Right cardiac atrium (tissue), 5 donors: ENCODE measurements at regions of chr18 and their contacts with region 1.

Region 1: DNA sequence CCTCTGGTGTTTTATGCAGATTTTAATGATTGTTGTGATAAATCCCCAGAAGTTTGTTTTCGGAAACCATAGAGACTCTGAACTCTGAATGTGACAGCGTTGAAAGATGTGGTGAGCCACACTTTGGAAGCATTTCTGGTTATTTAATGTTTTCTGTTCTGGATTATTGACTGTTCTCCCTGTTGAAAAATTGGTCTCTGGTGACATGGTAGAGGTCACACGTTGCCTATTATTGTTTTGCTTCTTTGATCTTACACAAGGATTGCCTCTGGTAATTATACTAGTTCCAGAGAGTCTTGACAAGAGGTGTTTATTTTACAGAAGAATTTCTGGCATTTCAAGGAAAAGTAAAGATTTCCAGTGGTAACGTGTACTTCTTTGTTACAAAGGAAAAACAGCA is 127.1 kb downstream of the GREB1L start:
- DNase-seq: no peak
- ATAC-seq: no peak
- H3K4me3 ChIP-seq: no peak overlapping the region
- H3K27ac ChIP-seq: no peak overlapping the region
- H3K4me1 ChIP-seq: no peaks in the 10 kb centered on the region
- H3K27me3 ChIP-seq: no peaks in the 10 kb centered on the region

Region 2: GRCh38 chr18:21327101-21327500 is 42.0 kb before region 1 on chr18:
- intact Hi-C with region 1: loop called in 1 of 4 experiments (anchors 10 kb)
- DNase-seq: no peak
- ATAC-seq: no peak
- H3K4me3 ChIP-seq: no peak overlapping the region
- H3K27ac ChIP-seq: no peak overlapping the region
- H3K4me1 ChIP-seq: no peaks in the 10 kb centered on the region
- H3K27me3 ChIP-seq: no peaks in the 10 kb centered on the region

Region 3: GRCh38 chr18:21629089-21629832 is 260.1 kb after region 1 on chr18:
- intact Hi-C with region 1: no loop called
- DNase-seq: no peak
- ATAC-seq: no peak
- H3K4me3 ChIP-seq: no peak overlapping the region
- H3K27ac ChIP-seq: no peak overlapping the region
- H3K4me1 ChIP-seq: no peaks in the 10 kb centered on the region
- H3K27me3 ChIP-seq: no peaks in the 10 kb centered on the region

Region 4: DNA sequence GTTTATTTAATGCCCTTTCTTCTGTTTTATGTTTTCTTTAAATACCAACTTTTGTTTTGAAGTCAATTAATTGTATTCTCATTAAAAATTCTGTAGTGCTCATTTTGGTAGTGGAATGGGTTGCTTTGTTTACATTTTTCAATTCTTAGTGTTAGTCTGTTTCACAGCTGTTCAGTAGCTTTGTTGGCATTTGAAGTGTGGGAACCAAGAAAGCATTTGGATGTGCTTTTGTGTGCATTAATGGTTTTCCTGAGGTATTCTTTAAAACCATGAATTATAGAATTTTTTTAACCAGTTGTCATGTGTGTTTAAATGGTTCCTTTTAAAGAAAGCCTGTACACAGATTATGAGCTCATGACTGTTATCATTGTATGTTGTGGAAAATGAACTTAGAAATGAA is 391.2 kb after region 1 on chr18:
- intact Hi-C with region 1: no loop called
- DNase-seq: no peak
- ATAC-seq: no peak
- H3K4me3 ChIP-seq: no peak overlapping the region
- H3K27ac ChIP-seq: no peak overlapping the region
- H3K4me1 ChIP-seq: peaks cover 3% of the 10 kb centered on the region
- H3K27me3 ChIP-seq: no peaks in the 10 kb centered on the region